K562 (cell line): ENCODE measurements at regions of chr19 and their contacts with region 1.

Region 1: GRCh38 chr19:41133260-41133659 is 19.0 kb downstream of the CYP2F1 start:
- DNase-seq: no peak
- ATAC-seq: no peak
- H3K4me3 ChIP-seq: no peak overlapping the region
- H3K27ac ChIP-seq: no peak overlapping the region
- H3K4me1 ChIP-seq: peaks cover 0 to 14% of the 10 kb centered on the region in 2 experiments; a peak in 2 of 5 replicates
- H3K27me3 ChIP-seq: peaks cover 0 to 8% of the 10 kb centered on the region in 2 experiments; a peak in 4 of 5 replicates
- CTCF ChIP-seq: no peak
- EP300 ChIP-seq: no peak
- POLR2A ChIP-seq: no peak
- RAD21 ChIP-seq: no peak

Region 2: GRCh38 chr19:40806488-40807468 is 326.5 kb before region 1 on chr19:
- CTCF ChIA-PET with region 1: no interaction called
- POLR2A ChIA-PET with region 1: no interaction called
- in situ Hi-C with region 1: loop called (anchors 5 kb)
- intact Hi-C with region 1: no loop called
- DNase-seq: peak; percentile 75 to 87 (median 80)
- ATAC-seq: peak; percentile 68
- H3K4me3 ChIP-seq: no peak overlapping the region
- H3K27ac ChIP-seq: no peak overlapping the region
- H3K4me1 ChIP-seq: peaks cover 39 to 82% of the 10 kb centered on the region in 2 experiments
- H3K27me3 ChIP-seq: no peaks in the 10 kb centered on the region
- CTCF ChIP-seq: peak; percentile 82 to 91 (median 85)
- EP300 ChIP-seq: no peak
- POLR2A ChIP-seq: no peak; the same call in 1 of the 2 replicates
- RAD21 ChIP-seq: peak; percentile 41 to 59

Region 3: GRCh38 chr19:41098810-41099209 is 34.5 kb before region 1 on chr19:
- CTCF ChIA-PET with region 1: no interaction called
- POLR2A ChIA-PET with region 1: no interaction called
- in situ Hi-C with region 1: no loop called
- intact Hi-C with region 1: no loop called
- DNase-seq: no peak
- ATAC-seq: no peak
- H3K4me3 ChIP-seq: no peak overlapping the region
- H3K27ac ChIP-seq: no peak overlapping the region
- H3K4me1 ChIP-seq: peaks cover 0 to 2% of the 10 kb centered on the region in 2 experiments; a peak in 2 of 5 replicates
- H3K27me3 ChIP-seq: peaks cover 0 to 11% of the 10 kb centered on the region in 2 experiments; a peak in 3 of 5 replicates
- CTCF ChIP-seq: no peak
- EP300 ChIP-seq: no peak
- POLR2A ChIP-seq: no peak
- RAD21 ChIP-seq: no peak